ENCODE measurements at regions of chr4 and their contacts with region 1.

Region 1: DNA sequence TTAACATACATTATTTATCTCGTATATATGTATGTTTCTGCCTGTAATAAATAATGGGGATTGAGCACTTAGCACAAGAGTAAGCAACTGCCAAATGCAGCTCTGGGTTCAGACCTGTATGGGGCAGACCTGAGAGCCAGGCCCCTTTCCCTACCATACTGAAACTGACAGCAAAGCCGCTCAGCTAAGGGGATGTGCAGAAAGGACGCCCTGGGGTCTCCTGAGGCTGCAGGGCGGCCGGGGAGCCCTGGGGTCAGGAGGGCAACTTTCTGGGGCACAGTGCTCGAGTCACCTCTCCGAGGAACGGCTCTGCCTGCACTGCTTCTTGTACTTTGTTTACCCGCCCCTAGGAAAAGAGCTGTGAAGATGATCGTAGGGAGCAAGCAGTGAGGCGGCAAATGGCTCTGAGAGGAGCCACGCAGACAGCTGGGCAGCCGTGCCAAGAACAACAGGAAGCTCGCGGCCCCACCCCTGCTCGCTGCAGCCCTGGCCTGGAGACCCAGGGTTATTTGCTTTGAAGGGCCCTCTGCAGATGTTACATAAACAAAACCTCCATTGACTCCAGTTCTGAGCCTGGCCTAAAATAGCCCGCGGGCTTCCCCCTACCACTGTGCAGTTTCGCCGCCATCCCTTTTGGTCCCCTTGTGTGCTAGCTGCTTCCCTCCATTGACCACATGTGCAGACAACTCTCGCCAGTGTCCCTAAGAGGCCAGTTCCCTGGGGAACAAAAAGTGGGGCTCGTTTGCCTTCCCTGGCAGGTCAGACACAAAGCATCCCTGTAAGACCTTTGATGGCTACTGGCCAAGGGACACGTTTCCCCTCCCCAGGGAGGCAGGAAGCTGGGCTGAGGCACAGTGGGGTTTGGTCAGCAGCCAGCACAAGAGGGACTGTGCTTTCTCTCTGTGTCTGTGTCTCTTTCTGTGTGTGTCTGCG is 111.3 kb upstream of the LNX1 start:
- DNase-seq: peak; percentile 77
- ATAC-seq: peak; percentile 83
- H3K4me3 ChIP-seq: no peak overlapping the region
- H3K27ac ChIP-seq: peak overlapping the region; percentile 86
- H3K4me1 ChIP-seq: peaks cover 22% of the 10 kb centered on the region
- H3K27me3 ChIP-seq: no peaks in the 10 kb centered on the region
- CTCF ChIP-seq: 0 out of 2 replicates have a peak, but pooled peaks have one; percentile 10
- POLR2A ChIP-seq: no peak
- RAD21 ChIP-seq: peak; percentile 4; the same call in 1 of the 2 replicates

Region 2: DNA sequence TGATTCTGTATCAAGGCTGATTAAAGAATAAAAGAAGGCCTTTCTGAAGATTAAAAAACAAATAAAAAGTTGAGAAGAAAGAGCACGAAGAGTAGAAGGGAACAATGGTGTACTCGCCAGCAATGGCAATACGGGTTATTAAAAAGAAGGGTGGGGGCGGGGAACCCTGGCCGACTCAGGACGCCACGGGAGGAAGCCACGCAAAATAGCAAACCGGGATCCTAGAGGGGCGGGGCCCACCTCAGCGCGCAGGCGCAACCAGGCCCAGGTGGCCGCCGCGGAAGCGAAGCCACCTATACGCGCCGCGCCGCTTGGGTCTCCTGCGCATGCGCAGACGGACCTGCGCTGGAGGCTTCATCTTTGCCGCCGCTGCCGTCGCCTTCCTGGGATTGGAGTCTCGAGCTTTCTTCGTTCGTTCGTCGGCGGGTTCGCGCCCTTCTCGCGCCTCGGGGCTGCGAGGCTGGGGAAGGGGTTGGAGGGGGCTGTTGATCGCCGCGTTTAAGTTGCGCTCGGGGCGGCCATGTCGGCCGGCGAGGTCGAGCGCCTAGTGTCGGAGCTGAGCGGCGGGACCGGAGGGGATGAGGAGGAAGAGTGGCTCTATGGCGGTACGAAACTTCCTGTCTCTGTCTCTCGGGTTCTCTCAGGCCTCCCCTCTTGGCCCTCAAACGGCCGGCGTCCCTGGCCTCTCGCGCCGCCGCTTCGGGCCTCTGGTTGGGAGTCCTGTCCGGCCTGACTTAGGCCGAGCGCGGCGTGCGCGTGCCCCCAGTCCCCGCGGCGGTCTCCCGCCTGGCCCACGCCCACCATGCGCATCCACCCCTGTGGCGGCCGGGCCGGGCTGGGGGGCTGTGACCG is 325.1 kb before region 1 on chr4 and contains the start of gene FIP1L1:
- CTCF ChIA-PET with region 1: no interaction called
- POLR2A ChIA-PET with region 1: no interaction called
- dilution Hi-C with region 1: no loop called
- in situ Hi-C with region 1: no loop called
- intact Hi-C with region 1: loop called (anchors 10 kb)
- DNase-seq: peak; percentile 87
- ATAC-seq: peak; percentile 96
- H3K4me3 ChIP-seq: peak within 1 kb of the TSS; percentile 93
- H3K27ac ChIP-seq: peak within 1 kb of the TSS; percentile 95
- H3K4me1 ChIP-seq: no peaks in the 10 kb centered on the region; the same call in 1 of the 2 replicates
- H3K27me3 ChIP-seq: no peaks in the 10 kb centered on the region
- CTCF ChIP-seq: no peak
- POLR2A ChIP-seq: peak; percentile 74
- RAD21 ChIP-seq: no peak
- total RNA-seq, gene FIP1L1: 37.5 and 48.9 TPM in 2 replicates

Region 3: DNA sequence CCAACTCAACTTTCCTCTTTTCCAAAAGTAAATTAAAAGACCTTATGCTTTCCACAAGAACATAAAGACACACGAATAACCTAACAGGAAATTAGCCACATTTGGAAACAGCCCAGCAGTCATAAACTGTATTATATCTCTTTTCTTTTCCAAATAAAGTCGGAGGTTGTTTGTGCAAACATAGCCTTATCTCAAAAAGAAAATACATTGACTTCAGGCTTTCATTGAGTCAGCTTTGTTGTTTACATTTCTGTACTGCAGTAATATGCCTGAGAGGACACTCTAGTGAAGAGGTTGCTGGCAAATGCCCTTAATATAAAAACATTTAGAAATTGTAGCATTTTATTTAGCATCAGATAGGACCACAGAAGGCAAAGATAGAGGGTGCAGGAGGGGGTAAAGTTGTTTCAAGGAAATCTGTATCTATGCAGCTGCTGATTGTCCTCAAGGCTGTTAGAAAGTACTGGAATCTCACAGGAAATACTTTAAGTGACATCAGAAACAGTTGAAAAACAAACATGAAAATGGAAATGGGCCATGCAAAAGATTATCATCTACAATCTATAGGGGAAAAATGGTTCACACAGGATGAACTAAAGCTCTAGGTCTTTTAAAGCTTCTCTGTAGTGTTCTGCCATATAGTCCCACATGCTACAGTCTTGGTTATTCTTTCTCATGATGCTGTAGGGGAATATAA is 125.8 kb before region 1 on chr4:
- CTCF ChIA-PET with region 1: no interaction called
- POLR2A ChIA-PET with region 1: no interaction called
- dilution Hi-C with region 1: no loop called
- in situ Hi-C with region 1: no loop called
- intact Hi-C with region 1: loop called (anchors 5 kb)
- DNase-seq: peak; percentile 90
- ATAC-seq: peak; percentile 76
- H3K4me3 ChIP-seq: no peak overlapping the region
- H3K27ac ChIP-seq: peak overlapping the region; percentile 100
- H3K4me1 ChIP-seq: peaks cover 32% of the 10 kb centered on the region
- H3K27me3 ChIP-seq: no peaks in the 10 kb centered on the region
- CTCF ChIP-seq: no peak
- POLR2A ChIP-seq: no peak
- RAD21 ChIP-seq: no peak

Region 4: DNA sequence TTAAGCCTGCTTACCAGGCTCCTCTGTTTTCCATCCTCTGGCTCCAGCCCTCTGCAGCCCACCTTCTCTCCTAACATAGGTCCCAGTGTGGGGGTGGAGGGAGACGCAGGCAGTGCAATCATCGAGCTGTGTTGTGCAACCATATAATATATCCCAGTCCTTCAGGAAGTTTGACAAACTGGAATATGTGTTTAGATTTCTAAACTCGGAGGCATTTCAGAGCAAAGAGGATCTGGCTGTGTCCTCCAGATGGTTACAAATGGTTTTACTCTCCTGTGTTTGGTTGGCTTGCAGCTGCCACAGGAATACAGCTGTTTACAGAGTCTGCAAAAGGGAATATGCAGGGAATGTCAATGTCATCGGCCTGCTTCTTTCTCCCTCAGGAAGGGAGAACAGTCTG is 84.0 kb after region 1 on chr4:
- CTCF ChIA-PET with region 1: interaction called, 11 read pairs
- POLR2A ChIA-PET with region 1: interaction called, 3 read pairs
- dilution Hi-C with region 1: no loop called
- in situ Hi-C with region 1: no loop called
- intact Hi-C with region 1: loop called (anchors 5 kb)
- DNase-seq: peak; percentile 93
- ATAC-seq: peak; percentile 77
- H3K4me3 ChIP-seq: no peak overlapping the region
- H3K27ac ChIP-seq: peak overlapping the region; percentile 93
- H3K4me1 ChIP-seq: peaks cover 39% of the 10 kb centered on the region
- H3K27me3 ChIP-seq: no peaks in the 10 kb centered on the region
- CTCF ChIP-seq: no peak
- POLR2A ChIP-seq: no peak
- RAD21 ChIP-seq: no peak

Region 5: DNA sequence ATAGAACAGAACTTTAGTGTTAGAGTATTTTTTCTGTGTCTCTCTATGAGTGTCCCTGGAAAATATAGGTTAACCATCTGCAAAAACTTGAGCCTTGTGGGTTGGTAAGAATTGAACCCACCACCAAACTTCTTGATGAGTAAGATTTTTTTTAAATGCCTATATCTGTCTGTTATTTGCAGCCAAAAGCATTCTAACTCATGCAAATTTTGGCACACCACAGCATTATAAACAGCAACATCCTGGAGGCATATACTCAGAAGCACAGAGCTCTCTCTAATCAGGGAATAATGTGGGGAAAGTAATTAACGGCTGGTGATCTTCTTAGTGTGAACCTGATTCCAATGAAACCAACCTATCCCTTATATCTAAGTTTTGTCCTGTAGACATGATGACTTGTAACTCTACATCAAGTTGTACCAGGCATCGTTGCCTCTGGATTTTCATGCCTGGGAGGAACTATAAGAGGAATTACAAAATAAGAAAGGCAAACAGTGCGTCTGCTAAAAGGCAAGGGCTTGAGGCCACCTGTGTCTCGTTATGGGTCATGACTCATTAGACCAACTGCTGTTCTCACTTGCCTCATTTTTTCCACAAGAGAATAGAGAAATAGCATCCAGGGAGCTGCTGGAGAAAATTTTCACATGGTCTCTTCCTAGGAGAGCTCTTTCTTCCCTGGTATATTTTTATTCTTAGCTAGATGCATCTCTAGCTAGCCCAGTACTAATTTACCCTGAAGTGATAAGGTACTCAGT is 159.4 kb after region 1 on chr4:
- CTCF ChIA-PET with region 1: no interaction called
- POLR2A ChIA-PET with region 1: no interaction called
- dilution Hi-C with region 1: no loop called
- in situ Hi-C with region 1: no loop called
- intact Hi-C with region 1: loop called (anchors 5 kb)
- DNase-seq: peak; percentile 96
- ATAC-seq: peak; percentile 70
- H3K4me3 ChIP-seq: no peak overlapping the region
- H3K27ac ChIP-seq: peak overlapping the region; percentile 89; the same call in 1 of the 2 replicates
- H3K4me1 ChIP-seq: peaks cover 15% of the 10 kb centered on the region
- H3K27me3 ChIP-seq: no peaks in the 10 kb centered on the region
- CTCF ChIP-seq: no peak
- POLR2A ChIP-seq: no peak
- RAD21 ChIP-seq: peak; percentile 25; the same call in 1 of the 2 replicates

Region 6: DNA sequence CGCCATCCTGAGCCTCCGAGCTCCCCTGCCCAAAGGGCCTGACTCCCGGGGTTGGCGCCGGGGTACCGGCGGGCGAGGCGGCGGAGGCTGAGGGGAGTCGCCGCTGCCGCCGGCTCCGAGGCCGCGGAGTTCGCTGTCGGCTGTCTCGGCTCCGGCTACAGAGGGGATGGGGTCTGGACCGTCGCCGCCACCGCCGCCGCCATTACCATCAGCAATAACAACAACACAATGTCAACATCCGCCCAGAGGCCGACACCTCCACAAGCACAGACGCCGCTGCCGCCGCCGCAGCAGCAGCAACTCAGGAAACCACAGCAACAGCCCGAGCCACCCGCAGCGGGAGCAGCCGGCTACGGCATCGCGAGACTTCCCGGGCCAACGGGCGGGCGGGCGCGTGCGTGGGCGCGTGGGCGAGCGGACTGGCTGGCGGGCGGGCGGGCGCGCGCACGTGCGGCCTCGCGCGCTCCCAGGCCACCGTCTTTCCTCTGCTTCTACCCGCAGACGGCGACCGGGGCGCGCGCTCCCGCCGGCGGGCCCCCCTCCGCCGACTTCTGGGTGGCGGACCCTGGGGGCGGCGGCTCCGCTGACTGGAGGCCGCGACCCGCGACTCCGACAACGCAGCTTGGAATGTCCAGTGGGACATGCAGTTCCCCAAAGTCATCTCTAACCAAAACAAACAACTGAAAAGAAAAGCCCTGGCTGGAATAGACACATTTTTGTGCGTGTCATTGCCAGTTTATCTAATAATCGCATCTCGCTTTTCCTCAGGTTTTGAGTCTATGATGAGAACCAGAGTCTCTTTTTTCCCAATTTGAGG is 361.9 kb after region 1 on chr4 and contains the start of gene CHIC2:
- CTCF ChIA-PET with region 1: no interaction called
- POLR2A ChIA-PET with region 1: no interaction called
- dilution Hi-C with region 1: no loop called
- in situ Hi-C with region 1: no loop called
- intact Hi-C with region 1: loop called (anchors 10 kb)
- DNase-seq: peak; percentile 92
- ATAC-seq: peak; percentile 88
- H3K4me3 ChIP-seq: peak within 1 kb of the TSS; percentile 81
- H3K27ac ChIP-seq: peak within 1 kb of the TSS; percentile 97
- H3K4me1 ChIP-seq: peaks cover 13% of the 10 kb centered on the region; the same call in 1 of the 2 replicates
- H3K27me3 ChIP-seq: no peaks in the 10 kb centered on the region
- CTCF ChIP-seq: no peak
- POLR2A ChIP-seq: peak; percentile 96
- RAD21 ChIP-seq: no peak
- total RNA-seq, gene CHIC2: 26.3 and 65.0 TPM in 2 replicates